Psoas muscle (tissue), 8 donors: ENCODE measurements at regions of chr6 and their contacts with region 1.

Region 1: GRCh38 chr6:159693128-159693893 is at the start of gene SOD2:
- DNase-seq: peak; percentile 91 to 94
- ATAC-seq: peak; percentile 81 to 86 (median 82)
- H3K4me3 ChIP-seq: peak within 1 kb of the TSS; percentile 99
- H3K27ac ChIP-seq: peak within 1 kb of the TSS; percentile 97
- H3K4me1 ChIP-seq: peaks cover 51% of the 10 kb centered on the region
- H3K27me3 ChIP-seq: no peaks in the 10 kb centered on the region
- CTCF ChIP-seq: no peak
- total RNA-seq, gene SOD2: 573 to 7,738 (median 3,937) TPM

Region 2: DNA sequence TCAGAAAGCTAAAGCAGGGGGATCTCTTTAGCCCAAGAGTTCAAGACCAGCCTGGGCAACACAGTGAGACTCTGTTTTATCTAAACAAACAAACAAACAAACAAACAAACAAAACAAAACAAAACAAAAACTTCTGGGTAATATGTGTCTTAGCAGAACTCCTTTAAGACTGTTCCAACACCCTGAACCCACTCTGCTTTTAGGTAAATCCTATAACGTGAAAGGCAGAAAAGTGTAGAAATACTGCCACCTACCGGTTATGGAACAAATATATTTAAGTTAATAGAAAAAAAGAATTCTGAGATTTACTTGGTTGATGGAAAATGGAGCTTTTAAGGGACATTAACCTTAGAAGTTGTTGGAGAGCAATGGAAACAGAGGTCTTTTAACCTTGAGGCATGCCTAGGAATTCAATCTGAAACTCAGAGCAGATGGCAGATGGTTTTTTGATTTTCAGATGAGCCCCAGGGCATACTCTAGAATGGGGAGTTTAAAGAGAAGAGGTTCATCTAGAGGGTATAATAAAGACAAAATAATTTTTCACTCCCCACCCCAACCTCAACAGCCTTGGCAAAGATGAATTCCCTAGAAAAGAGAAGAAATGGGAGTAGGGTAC is 38.7 kb before region 1 on chr6:
- intact Hi-C with region 1: no loop called
- DNase-seq: no peak
- ATAC-seq: peak in 3 of 4 donors; percentile 31 to 49 (median 41)
- H3K4me3 ChIP-seq: no peak overlapping the region
- H3K27ac ChIP-seq: no peak overlapping the region
- H3K4me1 ChIP-seq: no peaks in the 10 kb centered on the region
- H3K27me3 ChIP-seq: no peaks in the 10 kb centered on the region
- CTCF ChIP-seq: peak; percentile 68

Region 3: GRCh38 chr6:159726918-159727716 is 33.8 kb after region 1 on chr6 and contains the start of gene WTAP:
- intact Hi-C with region 1: loop called (anchors 2 kb)
- DNase-seq: peak; percentile 96 to 97
- ATAC-seq: peak; percentile 94 to 96 (median 96)
- H3K4me3 ChIP-seq: peak within 1 kb of the TSS; percentile 90
- H3K27ac ChIP-seq: peak within 1 kb of the TSS; percentile 97
- H3K4me1 ChIP-seq: peaks cover 49% of the 10 kb centered on the region
- H3K27me3 ChIP-seq: no peaks in the 10 kb centered on the region
- CTCF ChIP-seq: no peak
- total RNA-seq, gene WTAP: 51.8 to 199 (median 107) TPM

Region 4: DNA sequence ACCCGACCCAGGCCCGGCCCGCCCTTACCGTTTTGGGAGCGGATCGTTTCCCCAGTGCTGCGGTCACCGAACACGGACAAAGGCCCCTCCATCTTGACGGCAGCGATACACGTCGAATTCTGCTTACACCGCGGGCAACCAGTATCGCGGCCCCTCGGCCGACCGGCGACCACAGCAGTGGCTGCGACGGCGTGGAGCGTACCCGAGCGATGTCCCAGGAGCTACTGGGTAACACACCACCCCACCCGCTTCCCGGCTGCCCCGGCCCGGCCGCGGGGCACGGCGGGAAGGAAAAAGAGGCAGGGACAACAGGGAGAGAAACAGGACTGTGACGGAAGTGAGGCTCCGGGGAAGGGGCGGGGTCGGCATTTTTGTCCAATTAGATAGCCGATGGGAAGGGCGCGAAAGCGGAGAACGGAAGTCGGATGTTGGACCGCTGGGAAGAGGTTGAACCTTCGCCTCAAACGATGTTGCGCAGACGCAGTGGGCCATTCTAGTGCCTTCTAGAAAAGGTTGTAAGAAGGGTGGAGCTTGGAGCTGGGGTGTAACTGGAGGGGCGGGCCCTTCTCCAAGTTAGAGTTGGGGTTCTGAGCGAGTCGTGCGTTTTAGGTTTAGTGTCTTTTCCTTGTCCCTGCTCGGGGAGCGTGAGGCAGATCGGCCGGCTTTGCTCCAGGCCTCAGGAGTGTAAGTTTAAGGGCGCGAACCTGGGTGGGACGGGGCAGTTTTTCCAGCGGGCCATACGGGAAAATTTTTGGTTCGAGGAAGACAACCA is 96.3 kb after region 1 on chr6 and contains the start of gene TCP1:
- intact Hi-C with region 1: loop called (anchors 2 kb)
- DNase-seq: peak; percentile 99 to 100
- ATAC-seq: peak; percentile 88 to 90 (median 88)
- H3K4me3 ChIP-seq: peak within 1 kb of the TSS; percentile 96
- H3K27ac ChIP-seq: peak within 1 kb of the TSS; percentile 93
- H3K4me1 ChIP-seq: peaks cover 32% of the 10 kb centered on the region
- H3K27me3 ChIP-seq: no peaks in the 10 kb centered on the region
- CTCF ChIP-seq: no peak
- total RNA-seq, gene TCP1: 156 to 228 (median 193) TPM

Region 5: GRCh38 chr6:159852877-159853276 is 159.6 kb after region 1 on chr6:
- intact Hi-C with region 1: loop called in 1 of 2 experiments (anchors 10 kb)
- DNase-seq: no peak
- ATAC-seq: no peak
- H3K4me3 ChIP-seq: no peak overlapping the region
- H3K27ac ChIP-seq: no peak overlapping the region
- H3K4me1 ChIP-seq: no peaks in the 10 kb centered on the region
- H3K27me3 ChIP-seq: no peaks in the 10 kb centered on the region
- CTCF ChIP-seq: no peak

Region 6: DNA sequence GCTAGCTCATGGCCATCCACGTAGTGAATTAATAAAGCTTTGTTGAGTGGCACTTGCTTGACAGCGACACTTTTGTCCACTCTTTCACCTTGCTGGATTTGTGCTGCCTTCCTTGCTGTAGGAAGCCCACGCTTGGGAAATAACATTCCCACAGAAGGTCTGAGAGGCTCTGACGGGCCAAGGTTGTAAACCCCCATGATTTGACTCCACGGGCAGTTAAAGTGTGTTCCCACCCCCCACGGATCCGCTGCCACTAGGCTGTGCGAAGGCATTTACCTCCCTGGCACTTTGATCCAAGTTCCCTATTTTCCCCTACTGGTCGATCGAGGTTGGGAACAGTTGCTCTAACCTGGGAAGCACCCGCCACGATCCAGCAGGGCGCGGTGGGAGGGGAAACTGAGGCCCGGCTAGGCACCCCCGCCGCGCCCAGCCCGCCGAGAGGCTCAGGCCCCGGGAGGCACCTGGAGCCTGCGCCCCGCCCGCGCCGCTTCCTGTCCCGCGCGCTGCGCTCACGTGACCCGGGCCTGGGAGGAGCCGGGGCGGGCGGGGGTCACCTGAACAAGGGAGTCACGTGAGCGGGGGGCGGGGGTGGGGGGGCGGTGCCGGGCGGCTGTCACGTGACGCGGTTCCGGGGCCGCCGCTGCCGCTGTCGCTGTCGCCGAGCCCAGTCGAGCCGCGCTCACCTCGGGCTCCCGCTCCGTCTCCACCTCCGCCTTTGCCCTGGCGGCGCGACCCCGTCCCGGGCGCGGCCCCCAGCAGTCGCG is 275.3 kb after region 1 on chr6 and contains the start of gene IGF2R:
- intact Hi-C with region 1: loop called in 1 of 2 experiments (anchors 10 kb)
- DNase-seq: peak; percentile 96 to 97
- ATAC-seq: peak; percentile 90 to 94 (median 91)
- H3K4me3 ChIP-seq: peak within 1 kb of the TSS; percentile 89
- H3K27ac ChIP-seq: peak within 1 kb of the TSS; percentile 97
- H3K4me1 ChIP-seq: peaks cover 41% of the 10 kb centered on the region
- H3K27me3 ChIP-seq: no peaks in the 10 kb centered on the region
- CTCF ChIP-seq: no peak
- total RNA-seq, gene IGF2R: 113 to 167 (median 157) TPM